Mammary epithelial cell (primary cell): ENCODE measurements at regions of chr1 and their contacts with region 1.

Region 1: GRCh38 chr1:187223474-187223873 is 394.7 kb downstream of the PLA2G4A start:
- DNase-seq: no peak
- H3K4me3 ChIP-seq: no peak overlapping the region
- H3K27ac ChIP-seq: no peak overlapping the region
- H3K4me1 ChIP-seq: no peaks in the 10 kb centered on the region
- H3K27me3 ChIP-seq: no peaks in the 10 kb centered on the region
- CTCF ChIP-seq: no peak

Region 2: DNA sequence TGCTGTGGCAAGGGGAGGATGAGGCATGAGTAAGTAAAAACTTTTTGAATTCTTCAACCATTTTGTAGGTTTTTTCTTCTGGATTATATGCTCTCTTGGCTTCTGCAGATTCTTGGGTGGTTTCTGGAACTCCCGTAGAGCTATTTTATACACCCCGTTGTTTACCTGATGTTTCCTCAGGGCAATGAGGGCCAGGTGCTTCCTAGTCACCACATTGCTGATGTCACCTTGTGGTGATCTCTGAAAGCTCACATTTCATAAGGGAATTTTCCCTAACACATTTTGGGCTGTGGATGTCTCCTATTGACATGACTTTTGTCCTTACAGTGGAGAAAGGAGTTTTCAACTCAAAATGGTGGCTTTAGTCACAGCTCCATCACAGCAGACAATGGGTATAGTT is 38.1 kb before region 1 on chr1:
- CTCF ChIA-PET with region 1: no interaction called
- dilution Hi-C with region 1: loop called (anchors 5 kb)
- in situ Hi-C with region 1: no loop called
- intact Hi-C with region 1: no loop called
- DNase-seq: peak; percentile 0
- H3K4me3 ChIP-seq: no peak overlapping the region
- H3K27ac ChIP-seq: no peak overlapping the region
- H3K4me1 ChIP-seq: no peaks in the 10 kb centered on the region
- H3K27me3 ChIP-seq: no peaks in the 10 kb centered on the region
- CTCF ChIP-seq: no peak

Region 3: GRCh38 chr1:187306710-187307415 is 83.4 kb after region 1 on chr1:
- CTCF ChIA-PET with region 1: no interaction called
- dilution Hi-C with region 1: no loop called
- in situ Hi-C with region 1: no loop called
- intact Hi-C with region 1: no loop called
- DNase-seq: no peak
- H3K4me3 ChIP-seq: no peak overlapping the region
- H3K27ac ChIP-seq: no peak overlapping the region
- H3K4me1 ChIP-seq: no peaks in the 10 kb centered on the region
- H3K27me3 ChIP-seq: no peaks in the 10 kb centered on the region
- CTCF ChIP-seq: no peak